ENCODE measurements at regions of chr1 and their contacts with region 1.

Region 1: GRCh38 chr1:40143891-40144575 is 17.2 kb upstream of the RLF start:
- DNase-seq: peak; percentile 67
- H3K4me3 ChIP-seq: no peak overlapping the region
- H3K27ac ChIP-seq: no peak overlapping the region
- H3K4me1 ChIP-seq: no peaks in the 10 kb centered on the region
- H3K27me3 ChIP-seq: peaks cover 22 to 37% of the 10 kb centered on the region in 2 experiments
- CTCF ChIP-seq: peak; percentile 74 to 76
- POLR2A ChIP-seq: no peak

Region 2: DNA sequence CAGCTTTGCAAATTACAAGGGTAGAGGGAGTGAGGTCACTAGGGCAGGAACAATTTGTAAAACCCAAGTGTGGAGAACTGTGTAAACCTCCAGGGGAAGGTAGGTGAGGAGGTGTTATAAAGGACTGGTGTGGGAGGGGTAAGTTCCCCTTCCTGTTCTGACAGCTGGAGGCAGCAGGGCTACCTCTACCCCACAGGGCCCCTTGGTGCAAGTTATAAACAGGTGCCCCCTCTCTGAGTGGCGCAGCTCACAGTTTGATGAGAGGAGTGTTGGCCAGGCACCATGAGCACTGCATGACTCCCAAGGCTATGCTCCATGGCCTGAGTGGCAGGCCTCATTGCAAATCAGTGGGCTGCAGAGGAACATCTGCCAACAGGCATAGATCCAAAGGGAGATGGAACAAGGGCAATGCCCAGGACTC is 148.1 kb before region 1 on chr1:
- CTCF ChIA-PET with region 1: no interaction called
- POLR2A ChIA-PET with region 1: no interaction called
- dilution Hi-C with region 1: no loop called
- intact Hi-C with region 1: no loop called
- DNase-seq: no peak
- H3K4me3 ChIP-seq: no peak overlapping the region
- H3K27ac ChIP-seq: no peak overlapping the region
- H3K4me1 ChIP-seq: no peaks in the 10 kb centered on the region
- H3K27me3 ChIP-seq: no peaks in the 10 kb centered on the region
- CTCF ChIP-seq: no peak
- POLR2A ChIP-seq: no peak

Region 3: DNA sequence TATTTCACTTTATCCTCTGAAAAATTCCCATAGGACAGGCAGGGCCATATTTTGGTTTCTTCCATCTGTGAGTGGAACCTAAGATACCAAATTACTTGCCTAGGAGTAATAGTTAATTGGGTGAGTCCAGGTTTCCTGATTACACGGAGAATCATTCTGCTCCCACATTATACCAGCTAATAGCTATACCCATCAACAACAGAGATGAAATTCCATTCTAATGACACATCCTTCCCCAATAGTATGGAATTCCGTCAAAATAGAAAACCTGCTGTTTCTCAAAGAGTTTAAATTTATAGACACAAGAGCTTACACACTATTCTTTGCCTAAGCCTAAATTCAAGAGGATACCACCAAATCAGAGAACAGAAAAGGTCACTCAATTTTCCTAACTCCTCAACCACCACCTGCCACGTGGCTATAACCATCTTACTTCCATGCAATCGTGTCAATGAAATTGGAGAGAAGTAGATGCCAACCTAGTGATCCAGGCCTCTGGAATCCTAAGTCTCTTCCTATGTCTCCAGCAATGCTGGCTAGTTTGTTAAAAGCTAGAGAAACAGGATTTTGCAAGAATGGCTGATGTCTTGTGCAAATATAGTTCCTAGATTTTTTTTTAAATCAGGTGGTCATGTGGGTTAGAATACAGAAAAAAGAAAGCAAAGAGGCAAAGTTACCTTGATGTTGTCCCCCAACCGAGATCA is 53.2 kb before region 1 on chr1:
- CTCF ChIA-PET with region 1: interaction called, 12 read pairs
- POLR2A ChIA-PET with region 1: no interaction called
- dilution Hi-C with region 1: no loop called
- intact Hi-C with region 1: no loop called
- DNase-seq: peak; percentile 50
- H3K4me3 ChIP-seq: no peak overlapping the region
- H3K27ac ChIP-seq: peak overlapping the region; percentile 30
- H3K4me1 ChIP-seq: peaks cover 11% of the 10 kb centered on the region
- H3K27me3 ChIP-seq: no peaks in the 10 kb centered on the region
- CTCF ChIP-seq: no peak
- POLR2A ChIP-seq: no peak

Region 4: DNA sequence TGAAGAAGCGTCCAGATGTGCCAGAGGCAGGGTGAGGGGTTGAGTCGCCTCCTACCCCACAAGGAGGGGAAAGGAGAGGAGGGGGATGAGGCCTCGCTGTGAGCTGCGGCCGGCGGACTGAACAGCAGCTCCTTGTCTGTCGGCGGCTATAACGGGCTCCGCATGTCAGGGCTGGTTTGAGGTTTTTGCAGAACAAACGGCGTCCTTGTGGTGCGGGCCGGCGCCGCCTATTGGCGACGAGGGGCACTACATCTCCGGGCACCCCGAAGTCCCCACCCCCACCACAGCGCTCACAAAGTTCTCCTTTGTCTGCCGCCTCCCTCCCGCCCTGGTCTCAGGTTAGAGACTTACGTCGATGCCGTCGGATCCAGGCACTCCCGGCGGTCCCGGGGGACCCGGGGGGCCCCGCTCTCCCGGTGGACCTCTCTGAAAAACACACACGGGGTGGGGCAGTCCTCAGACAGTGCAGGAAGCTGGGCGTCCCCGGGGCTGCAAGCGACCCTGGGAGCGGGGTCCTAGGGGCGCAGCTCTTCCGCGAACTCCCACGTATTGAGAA is 171.3 kb after region 1 on chr1:
- CTCF ChIA-PET with region 1: interaction called, 39 read pairs
- POLR2A ChIA-PET with region 1: no interaction called
- dilution Hi-C with region 1: no loop called
- intact Hi-C with region 1: no loop called
- DNase-seq: peak; percentile 86
- H3K4me3 ChIP-seq: peak overlapping the region in 2 of 3 experiments; percentile 18 to 24
- H3K27ac ChIP-seq: no peak overlapping the region
- H3K4me1 ChIP-seq: peaks cover 4% of the 10 kb centered on the region
- H3K27me3 ChIP-seq: peaks cover 23 to 33% of the 10 kb centered on the region in 2 experiments
- CTCF ChIP-seq: peak; percentile 92 to 99
- POLR2A ChIP-seq: no peak

Region 5: DNA sequence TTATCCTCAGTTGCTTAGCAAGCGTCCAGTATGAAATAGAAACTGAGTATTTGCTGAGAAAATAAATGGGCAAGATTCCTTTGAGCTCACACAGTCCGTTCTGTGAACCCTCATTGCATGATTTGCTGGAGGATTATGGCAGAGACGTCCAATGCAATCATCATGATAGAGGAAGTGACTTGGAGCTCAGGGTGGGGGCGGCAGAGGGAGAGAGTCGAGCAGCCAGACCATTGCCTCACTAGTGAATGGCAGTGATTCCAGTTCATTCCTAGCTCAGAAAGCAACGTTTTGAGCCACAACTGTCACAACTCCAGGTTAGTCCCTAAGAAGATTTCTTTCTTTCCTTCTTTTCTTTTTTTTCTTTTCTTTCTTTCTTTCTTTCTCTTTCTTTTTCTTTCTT is 200.6 kb after region 1 on chr1:
- CTCF ChIA-PET with region 1: interaction called, 362 read pairs
- POLR2A ChIA-PET with region 1: no interaction called
- dilution Hi-C with region 1: no loop called
- intact Hi-C with region 1: no loop called
- DNase-seq: no peak
- H3K4me3 ChIP-seq: no peak overlapping the region
- H3K27ac ChIP-seq: no peak overlapping the region
- H3K4me1 ChIP-seq: no peaks in the 10 kb centered on the region
- H3K27me3 ChIP-seq: peaks cover 0 to 3% of the 10 kb centered on the region in 2 experiments
- CTCF ChIP-seq: no peak
- POLR2A ChIP-seq: no peak

Region 6: DNA sequence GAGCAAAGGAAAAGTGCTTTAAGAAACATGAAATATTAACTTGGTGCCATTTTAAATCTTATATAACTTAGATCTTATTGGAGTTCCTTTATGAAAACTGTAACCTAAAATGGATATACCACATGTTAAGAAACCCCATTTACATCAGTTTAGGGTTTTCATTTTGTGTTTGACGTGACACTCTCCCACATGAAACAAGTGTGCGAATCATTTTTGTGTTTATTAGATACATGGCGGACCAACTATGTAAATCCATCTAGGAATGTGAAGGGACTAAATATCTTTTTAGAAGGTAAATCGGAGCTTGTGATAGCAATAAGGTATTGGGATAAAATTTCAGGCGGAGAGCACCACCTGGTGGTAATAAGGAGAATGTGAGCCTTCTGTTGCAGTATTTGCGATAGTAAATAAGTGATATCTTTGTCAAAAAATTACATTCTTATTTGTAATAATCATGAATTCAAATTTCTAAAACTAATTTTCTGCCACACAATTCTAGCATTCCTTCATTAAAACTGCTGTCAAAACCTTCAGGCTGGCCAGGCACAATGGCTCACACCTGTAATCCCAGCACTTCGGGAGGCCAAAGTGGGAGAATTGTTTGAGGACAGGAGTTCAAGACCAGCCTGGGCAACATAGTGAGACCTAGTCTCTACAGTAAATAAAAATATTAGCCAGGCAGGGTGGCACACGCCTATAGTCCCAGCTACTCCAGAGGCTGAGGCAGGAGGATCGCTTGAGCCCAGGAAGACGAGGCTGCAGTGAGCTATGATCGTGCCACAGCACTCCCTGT is 260.8 kb after region 1 on chr1:
- CTCF ChIA-PET with region 1: interaction called, 173 read pairs
- POLR2A ChIA-PET with region 1: no interaction called
- dilution Hi-C with region 1: no loop called
- intact Hi-C with region 1: loop called (anchors 1 kb)
- DNase-seq: peak; percentile 75
- H3K4me3 ChIP-seq: no peak overlapping the region
- H3K27ac ChIP-seq: no peak overlapping the region
- H3K4me1 ChIP-seq: no peaks in the 10 kb centered on the region
- H3K27me3 ChIP-seq: no peaks in the 10 kb centered on the region
- CTCF ChIP-seq: peak; percentile 56 to 62
- POLR2A ChIP-seq: no peak

Region 7: DNA sequence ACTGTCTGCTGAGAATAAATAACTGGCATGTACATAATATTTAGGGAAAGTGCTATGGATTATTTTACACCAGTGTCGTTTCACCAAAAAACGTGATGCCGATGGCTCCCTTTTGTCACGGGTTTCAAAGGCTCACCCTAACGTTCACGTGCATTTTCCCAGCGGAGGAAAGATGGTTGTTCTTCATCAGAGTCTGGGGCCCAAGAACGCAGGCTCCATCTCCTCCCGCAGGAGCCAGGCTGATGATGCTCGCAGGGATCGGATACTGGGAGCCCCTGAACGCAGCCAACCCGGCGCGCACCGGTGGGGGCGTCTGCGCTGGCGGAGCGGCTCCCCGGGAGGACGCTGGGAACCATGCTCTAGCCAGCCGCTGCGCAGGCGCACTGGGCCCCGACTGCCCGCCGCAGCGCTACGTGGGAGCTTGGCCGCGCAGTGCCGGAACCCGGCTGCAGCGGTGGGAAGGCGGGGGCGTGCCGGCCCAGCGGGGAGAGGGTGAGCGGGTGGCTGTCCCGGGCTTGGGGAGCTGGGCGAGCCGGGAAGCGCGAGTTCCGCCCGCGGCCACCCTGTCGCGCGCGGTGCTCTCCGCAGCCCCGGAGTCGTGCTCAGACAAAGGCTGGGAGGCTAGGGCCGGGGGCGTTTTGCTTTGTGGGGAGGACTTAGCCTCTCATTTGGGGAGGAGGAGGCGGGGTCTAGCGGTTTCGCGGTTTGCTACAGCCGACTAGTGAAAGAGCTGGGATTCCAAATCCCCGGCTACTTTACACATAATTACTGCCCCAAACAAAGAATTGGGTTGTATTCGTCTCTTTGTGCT is 305.9 kb after region 1 on chr1 and contains the start of gene ZFP69B:
- CTCF ChIA-PET with region 1: interaction called, 13 read pairs
- POLR2A ChIA-PET with region 1: no interaction called
- dilution Hi-C with region 1: no loop called
- intact Hi-C with region 1: no loop called
- DNase-seq: peak; percentile 94
- H3K4me3 ChIP-seq: peak within 1 kb of the TSS; percentile 30 to 84 (median 54)
- H3K27ac ChIP-seq: peak within 1 kb of the TSS; percentile 63
- H3K4me1 ChIP-seq: peaks cover 10% of the 10 kb centered on the region
- H3K27me3 ChIP-seq: no peaks in the 10 kb centered on the region
- CTCF ChIP-seq: peak in 1 of 2 donors; percentile 33
- POLR2A ChIP-seq: peak; percentile 64
- total RNA-seq, gene ZFP69B: 2.7 and 3.4 TPM in 2 replicates